ENCODE measurements at regions of chr4 and their contacts with region 1.

Region 1: DNA sequence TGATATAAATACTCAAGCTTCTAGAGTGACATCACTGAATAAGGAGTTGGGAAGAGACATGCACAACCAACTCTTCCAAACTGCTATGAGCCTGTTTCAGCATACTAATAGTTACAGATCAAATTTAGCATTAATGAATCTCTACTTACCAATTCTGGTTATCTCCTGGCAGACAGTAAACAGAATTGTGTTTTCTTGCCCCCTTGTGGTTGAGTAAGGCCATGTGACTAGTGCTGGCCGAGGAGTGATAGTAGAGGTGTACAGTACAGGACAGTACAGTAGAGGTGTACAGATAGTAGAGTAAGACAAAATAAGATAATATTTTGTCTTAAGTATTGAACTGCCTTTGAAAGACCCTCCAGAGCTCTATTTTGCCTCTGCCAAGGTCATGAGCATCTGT is 681.4 kb downstream of the GABRG1 start:
- DNase-seq: no peak

Region 2: GRCh38 chr4:45036677-45037076 is 405.8 kb before region 1 on chr4:
- intact Hi-C with region 1: loop called (anchors 10 kb)
- DNase-seq: no peak

Region 3: GRCh38 chr4:45370408-45370807 is 72.1 kb before region 1 on chr4:
- intact Hi-C with region 1: no loop called
- DNase-seq: no peak

Region 4: GRCh38 chr4:46258431-46258830 is 816.0 kb after region 1 on chr4:
- intact Hi-C with region 1: no loop called
- DNase-seq: no peak